Activated T-helper 2 cell treated with anti-CD3 and anti-CD28 coated beads, Interferon-gamma antibody, Interleukin-2, Interleukin-4, amounts not matched to agents 10 μg/mL and 5 μg/mL and 100 μg/mL, durations not matched to agents 14 hours and 24 hours and 36 hours (primary cell): ENCODE measurements at regions of chr7 and their contacts with region 1.

Region 1: GRCh38 chr7:128387216-128388144 is 22.3 kb downstream of the IMPDH1 start:
- DNase-seq: peak; percentile 39
- H3K4me3 Mint-ChIP-seq: no peak overlapping the region
- H3K27ac Mint-ChIP-seq: no peak overlapping the region
- H3K4me1 Mint-ChIP-seq: no peaks in the 10 kb centered on the region
- H3K27me3 Mint-ChIP-seq: peaks cover 6% of the 10 kb centered on the region

Region 2: DNA sequence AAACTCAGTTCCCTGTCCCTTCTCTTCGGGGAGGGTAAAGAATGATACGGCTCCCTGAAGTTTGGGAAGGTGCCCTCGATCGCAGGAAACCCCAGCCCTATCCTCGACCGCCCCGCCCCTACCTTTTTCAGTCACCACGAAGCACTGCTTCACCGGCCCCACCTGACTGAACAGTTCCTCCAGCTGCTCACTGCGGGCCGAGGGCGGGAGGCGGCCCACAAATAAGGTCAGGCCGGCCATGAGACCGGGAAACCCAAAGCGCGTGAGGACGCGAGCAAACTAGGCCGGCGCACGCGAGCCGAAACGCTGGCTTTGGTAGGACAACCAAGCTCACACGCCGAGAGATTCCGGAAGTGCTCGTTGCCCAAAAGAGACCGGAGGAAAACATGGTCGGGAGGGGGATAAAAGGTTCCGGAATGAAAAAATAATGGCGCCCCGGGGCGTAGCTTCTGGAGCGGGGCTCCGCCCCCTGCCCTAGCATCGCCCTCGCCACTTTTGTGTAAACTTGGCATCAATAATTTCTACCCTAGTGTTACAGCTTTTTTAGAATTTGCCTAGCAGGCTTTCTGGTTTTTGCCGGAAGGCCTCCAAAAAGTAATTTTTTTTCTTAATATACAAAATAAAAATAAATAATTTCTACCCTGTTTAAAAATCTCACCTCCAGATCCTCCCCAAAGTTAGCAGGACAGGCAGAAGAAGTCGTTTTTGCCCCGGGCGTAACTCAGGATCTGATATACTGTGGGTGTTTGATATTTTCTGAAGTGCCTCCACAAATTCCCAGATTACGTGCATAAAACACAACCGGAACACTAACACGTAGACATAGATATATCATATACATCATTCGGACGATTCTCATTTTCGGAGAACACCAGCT is 43.7 kb before region 1 on chr7 and contains the start of gene RBM28:
- intact Hi-C with region 1: loop called (anchors 1 kb)
- DNase-seq: peak; percentile 84
- H3K4me3 Mint-ChIP-seq: peak within 1 kb of the TSS; percentile 92
- H3K27ac Mint-ChIP-seq: peak within 1 kb of the TSS; percentile 83
- H3K4me1 Mint-ChIP-seq: peaks cover 20% of the 10 kb centered on the region
- H3K27me3 Mint-ChIP-seq: peaks cover 12% of the 10 kb centered on the region
- total RNA-seq, gene RBM28: 66.7 and 67.7 TPM in 2 replicates